ENCODE measurements at regions of chr1 and their contacts with region 1.

Region 1: GRCh38 chr1:1273512-1274298 is at the start of gene UBE2J2:
- DNase-seq: peak; percentile 95 to 98 (median 96)
- ATAC-seq: peak; percentile 95 to 98 (median 97)
- H3K4me3 ChIP-seq: peak within 1 kb of the TSS; percentile 61 to 99 (median 94)
- H3K27ac ChIP-seq: peak within 1 kb of the TSS; percentile 41 to 96 (median 90)
- H3K4me1 ChIP-seq: peaks cover 14 to 47% (median 38%) of the 10 kb centered on the region in 12 donors
- H3K27me3 ChIP-seq: no peaks in the 10 kb centered on the region
- CTCF ChIP-seq: peak in 5 of 12 donors; percentile 5 to 35 (median 24)
- POLR2A ChIP-seq: peak in 1 of 2 donors; percentile 67
- total RNA-seq, gene UBE2J2: 23.3 to 43.9 (median 33.2) TPM

Region 2: GRCh38 chr1:1231400-1232223 is 42.1 kb before region 1 on chr1 and contains the start of gene SDF4:
- intact Hi-C with region 1: loop called in 3 of 10 experiments (anchors 2 to 5 kb)
- DNase-seq: peak; percentile 97 to 99 (median 98)
- ATAC-seq: peak; percentile 96 to 98 (median 97)
- H3K4me3 ChIP-seq: peak within 1 kb of the TSS; percentile 81 to 100 (median 98)
- H3K27ac ChIP-seq: peak within 1 kb of the TSS; percentile 92 to 99 (median 97)
- H3K4me1 ChIP-seq: peaks cover 8 to 49% (median 31%) of the 10 kb centered on the region in 12 donors
- H3K27me3 ChIP-seq: no peaks in the 10 kb centered on the region
- CTCF ChIP-seq: no peak
- POLR2A ChIP-seq: no peak
- total RNA-seq, gene SDF4: 102 to 167 (median 120) TPM